Activated T-helper 2 cell treated with anti-CD3 and anti-CD28 coated beads, Interferon-gamma antibody, Interleukin-2, Interleukin-4, amounts not matched to agents 10 μg/mL and 5 μg/mL and 100 μg/mL, durations not matched to agents 14 hours and 24 hours and 36 hours (primary cell): ENCODE measurements at regions of chr2 and their contacts with region 1.

Region 1: DNA sequence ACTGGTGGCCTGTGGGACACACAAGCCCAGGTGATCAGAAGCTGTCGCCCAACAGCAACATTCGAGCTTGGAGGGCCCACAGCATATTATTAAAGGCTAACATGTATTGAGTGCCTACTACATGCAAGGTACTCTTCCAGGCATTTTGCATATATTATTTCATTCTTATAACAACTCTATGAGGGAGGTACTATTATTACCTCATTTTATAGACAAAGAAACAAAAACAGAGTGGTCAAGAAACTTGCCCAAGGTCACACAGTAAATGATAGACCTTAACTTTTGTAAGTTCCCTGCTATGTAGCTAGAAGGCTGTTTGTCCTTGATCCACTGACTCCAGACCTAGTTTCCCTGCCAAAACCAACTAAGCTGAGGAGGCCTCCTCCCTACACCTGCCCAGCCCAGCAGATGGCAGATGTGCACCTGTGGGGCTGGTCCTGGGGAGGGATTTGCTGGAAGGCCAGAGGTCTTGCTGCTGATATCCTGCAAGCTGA is 35.7 kb downstream of the KANSL3 start:
- DNase-seq: no peak
- H3K4me3 Mint-ChIP-seq: no peak overlapping the region
- H3K27ac Mint-ChIP-seq: no peak overlapping the region
- H3K4me1 Mint-ChIP-seq: peaks cover 30% of the 10 kb centered on the region
- H3K27me3 Mint-ChIP-seq: no peaks in the 10 kb centered on the region

Region 2: GRCh38 chr2:96320728-96321622 is 281.4 kb before region 1 on chr2:
- intact Hi-C with region 1: loop called (anchors 2 kb)
- DNase-seq: no peak
- H3K4me3 Mint-ChIP-seq: peak overlapping the region; percentile 88
- H3K27ac Mint-ChIP-seq: peak overlapping the region; percentile 86
- H3K4me1 Mint-ChIP-seq: peaks cover 54% of the 10 kb centered on the region
- H3K27me3 Mint-ChIP-seq: no peaks in the 10 kb centered on the region

Region 3: DNA sequence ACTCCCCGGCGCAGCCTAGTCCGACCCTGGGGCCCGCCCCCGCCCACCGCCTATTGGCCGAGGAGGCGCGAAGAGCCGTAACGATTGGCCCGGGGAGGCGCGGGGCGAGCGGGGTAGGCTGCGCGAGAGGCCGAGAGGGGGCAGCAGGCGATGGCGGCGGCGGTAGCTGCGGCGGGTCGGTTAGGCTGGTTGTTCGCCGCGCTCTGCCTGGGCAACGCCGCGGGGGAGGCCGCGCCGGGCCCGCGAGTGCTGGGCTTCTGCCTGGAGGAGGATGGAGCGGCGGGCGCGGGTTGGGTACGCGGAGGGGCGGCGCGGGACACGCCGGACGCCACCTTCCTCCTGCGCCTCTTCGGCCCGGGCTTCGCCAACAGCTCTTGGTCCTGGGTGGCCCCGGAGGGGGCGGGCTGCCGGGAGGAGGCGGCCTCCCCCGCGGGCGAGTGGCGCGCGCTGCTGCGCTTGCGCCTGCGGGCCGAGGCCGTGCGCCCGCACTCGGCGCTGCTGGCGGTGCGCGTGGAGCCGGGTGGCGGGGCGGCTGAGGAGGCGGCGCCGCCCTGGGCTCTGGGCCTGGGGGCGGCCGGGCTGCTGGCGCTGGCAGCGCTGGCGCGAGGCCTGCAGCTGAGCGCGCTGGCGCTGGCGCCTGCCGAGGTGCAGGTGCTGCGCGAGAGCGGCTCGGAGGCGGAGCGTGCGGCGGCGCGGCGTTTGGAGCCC is 213.9 kb after region 1 on chr2 and contains the start of gene CNNM3:
- intact Hi-C with region 1: loop called (anchors 5 kb)
- DNase-seq: peak; percentile 95
- H3K4me3 Mint-ChIP-seq: peak within 1 kb of the TSS; percentile 84
- H3K27ac Mint-ChIP-seq: peak within 1 kb of the TSS; percentile 70
- H3K4me1 Mint-ChIP-seq: peaks cover 41% of the 10 kb centered on the region
- H3K27me3 Mint-ChIP-seq: no peaks in the 10 kb centered on the region
- total RNA-seq, gene CNNM3: 28.7 and 30.4 TPM in 2 replicates

Region 4: DNA sequence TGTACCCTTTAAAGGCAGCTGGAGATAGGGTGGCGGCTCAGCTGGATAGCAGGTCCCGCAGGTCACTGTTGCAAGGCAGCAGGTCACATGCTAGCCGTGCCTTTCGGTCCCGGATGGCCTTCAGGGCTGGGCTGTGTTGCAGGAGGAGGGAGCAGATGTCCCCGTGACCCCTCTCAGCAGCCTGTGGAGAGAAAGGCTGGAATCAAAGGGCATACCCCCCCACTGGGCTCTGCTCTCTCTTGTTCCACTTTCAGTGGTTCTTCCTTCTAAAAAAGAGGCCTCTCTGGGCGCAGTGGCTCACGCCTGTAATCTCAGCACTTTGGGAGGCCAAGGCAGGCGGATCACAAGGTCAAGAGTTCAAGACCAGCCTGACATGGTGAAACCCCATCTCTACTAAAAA is 245.9 kb after region 1 on chr2:
- intact Hi-C with region 1: no loop called
- DNase-seq: no peak
- H3K4me3 Mint-ChIP-seq: no peak overlapping the region
- H3K27ac Mint-ChIP-seq: no peak overlapping the region
- H3K4me1 Mint-ChIP-seq: no peaks in the 10 kb centered on the region
- H3K27me3 Mint-ChIP-seq: no peaks in the 10 kb centered on the region